Vagina (tissue), 2 donors: ENCODE measurements at regions of chr2 and their contacts with region 1.

Region 1: DNA sequence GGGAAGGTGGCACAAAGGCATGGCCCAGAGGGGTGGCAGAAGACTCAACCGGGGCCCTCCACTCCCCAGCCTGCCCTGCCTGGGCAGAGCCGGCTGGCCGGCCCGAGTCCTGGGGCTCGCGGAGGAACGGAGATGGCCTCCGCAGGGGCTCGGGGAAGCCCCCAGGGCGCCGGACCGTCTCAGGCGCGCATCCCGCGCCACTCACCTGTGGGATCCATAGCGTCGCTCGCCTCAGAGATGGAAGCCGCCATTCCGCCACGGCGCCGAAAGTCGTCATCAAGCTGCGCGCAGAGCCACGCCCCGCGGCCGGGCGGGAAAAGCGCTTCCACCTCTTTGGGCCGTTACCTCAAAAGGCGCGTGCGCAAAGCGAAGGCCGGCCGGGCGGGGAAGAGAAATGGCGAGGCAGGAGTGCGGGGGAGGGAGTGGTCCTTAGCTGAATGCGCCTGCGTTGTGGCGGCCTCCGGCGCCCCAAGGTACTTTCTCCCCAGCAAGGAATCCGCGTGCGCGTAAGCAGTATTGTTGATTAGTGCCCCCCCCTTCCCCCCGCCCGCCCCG is at the start of gene SMPD4:
- DNase-seq: peak in 1 of 2 donors; percentile 96
- H3K4me3 ChIP-seq: peak within 1 kb of the TSS; percentile 88 to 98
- H3K27ac ChIP-seq: peak within 1 kb of the TSS; percentile 86
- H3K4me1 ChIP-seq: peaks cover 35% of the 10 kb centered on the region
- H3K27me3 ChIP-seq: no peaks in the 10 kb centered on the region
- CTCF ChIP-seq: no peak
- POLR2A ChIP-seq: peak in 1 of 2 donors; percentile 8
- total RNA-seq, gene SMPD4: 45.2 TPM

Region 2: GRCh38 chr2:130342533-130343275 is 161.3 kb after region 1 on chr2 and contains the start of gene IMP4:
- intact Hi-C with region 1: loop called (anchors 10 kb)
- DNase-seq: peak in 1 of 2 donors; percentile 100
- H3K4me3 ChIP-seq: peak within 1 kb of the TSS; percentile 55 to 66
- H3K27ac ChIP-seq: peak within 1 kb of the TSS; percentile 87
- H3K4me1 ChIP-seq: peaks cover 28% of the 10 kb centered on the region
- H3K27me3 ChIP-seq: no peaks in the 10 kb centered on the region
- CTCF ChIP-seq: no peak
- POLR2A ChIP-seq: no peak
- total RNA-seq, gene IMP4: 88.4 TPM